ENCODE measurements at regions of chr20 and their contacts with region 1.

Region 1: DNA sequence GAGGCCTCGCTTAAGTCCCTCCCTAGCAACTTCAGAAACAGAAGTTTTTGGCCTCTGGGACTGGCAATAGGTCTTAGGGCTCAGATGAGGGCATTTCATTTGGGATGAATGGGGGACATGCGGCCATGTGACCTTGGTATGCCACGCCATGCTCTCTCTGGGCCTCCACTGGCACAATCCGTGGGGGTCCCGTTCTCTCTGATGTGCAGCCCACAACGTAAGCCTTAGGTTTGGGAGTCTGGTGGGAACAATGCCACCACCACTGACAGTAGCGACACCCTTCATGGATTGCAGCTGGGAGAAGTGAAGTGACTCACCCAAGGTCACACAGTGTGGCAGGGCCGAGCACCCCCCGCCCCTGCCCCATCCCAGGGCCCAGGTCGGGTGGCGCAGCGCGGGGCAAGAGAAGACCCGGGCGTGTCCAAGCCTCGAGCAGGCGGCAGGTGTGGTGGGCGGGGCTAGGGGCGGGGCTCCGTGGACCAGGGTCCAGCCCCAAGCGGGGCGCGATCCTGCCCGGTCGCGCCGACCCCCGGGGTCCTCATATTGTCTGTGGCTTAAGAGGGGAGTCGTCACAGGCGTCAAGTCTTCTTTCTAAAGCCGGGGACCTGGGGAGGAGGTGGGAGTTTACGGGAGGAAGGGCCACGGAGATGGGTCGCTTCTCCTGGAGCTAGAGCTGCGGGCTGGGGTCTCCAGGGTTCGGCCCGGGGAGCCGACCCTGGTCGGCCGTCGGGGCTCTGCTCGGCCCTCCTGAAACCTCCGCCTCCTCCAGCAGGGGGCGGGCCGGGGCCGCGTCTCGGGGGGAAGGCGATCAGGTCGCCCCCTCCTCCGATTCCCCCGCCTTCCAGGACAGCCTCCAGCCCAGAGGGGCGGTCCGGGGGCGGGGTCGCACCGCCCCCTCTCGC is 698 bp upstream of the CEBPB start:
- DNase-seq: peak; percentile 80 to 88
- ATAC-seq: peak; percentile 65 to 85 (median 71)
- H3K4me3 ChIP-seq: no peak overlapping the region
- H3K4me3 Mint-ChIP-seq: peak overlapping the region; percentile 57
- H3K27ac ChIP-seq: peak overlapping the region; percentile 36
- H3K27ac Mint-ChIP-seq: peak overlapping the region in 1 of 2 donors; percentile 94
- H3K4me1 ChIP-seq: peaks cover 27% of the 10 kb centered on the region
- H3K4me1 Mint-ChIP-seq: peaks cover 28 to 29% of the 10 kb centered on the region in 2 donors
- H3K27me3 ChIP-seq: peaks cover 2% of the 10 kb centered on the region
- H3K27me3 Mint-ChIP-seq: peaks cover 9 to 13% of the 10 kb centered on the region in 2 donors
- CTCF ChIP-seq: peak; percentile 74

Region 2: DNA sequence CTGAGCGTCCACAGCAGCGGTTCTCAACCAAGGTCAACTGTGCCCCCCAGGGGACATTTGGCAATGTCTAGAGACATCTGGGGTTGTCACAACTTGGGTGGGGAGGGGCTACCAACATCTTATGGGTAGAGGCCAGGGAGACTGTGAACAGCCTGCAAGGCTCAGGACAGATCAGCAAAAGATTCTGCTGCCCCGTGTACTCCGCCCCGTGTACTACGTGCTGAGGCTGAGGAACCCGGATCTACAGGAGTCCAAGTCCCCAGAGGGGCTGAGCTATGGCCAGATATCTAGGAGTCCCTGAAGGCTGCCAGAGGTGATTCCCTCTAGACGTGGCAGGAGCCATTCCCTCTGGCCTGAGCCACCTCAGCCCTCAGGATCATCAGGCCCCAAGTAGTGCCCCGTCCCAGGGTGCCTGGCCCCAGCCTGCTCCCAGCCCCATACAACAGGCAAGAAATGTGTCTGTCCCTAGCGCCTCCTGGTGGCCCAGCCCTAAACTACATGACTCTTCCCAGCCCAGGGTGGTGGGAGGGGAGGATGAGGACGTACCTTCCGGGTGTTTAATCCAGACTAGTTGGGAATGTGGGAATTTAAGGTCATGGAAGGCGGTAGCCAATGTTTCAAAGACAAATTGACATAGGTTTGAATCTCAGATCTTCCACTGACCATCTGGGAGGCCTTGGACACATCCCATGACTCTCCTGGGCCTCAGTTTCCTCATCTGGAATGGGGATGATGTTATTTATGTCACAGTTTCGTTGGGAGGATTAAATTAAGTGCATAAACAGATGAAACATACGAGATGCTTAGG is 270.7 kb after region 1 on chr20:
- intact Hi-C with region 1: loop called (anchors 1 kb)
- DNase-seq: peak; percentile 85 to 86
- ATAC-seq: peak; percentile 93 to 94 (median 93)
- H3K4me3 ChIP-seq: no peak overlapping the region
- H3K4me3 Mint-ChIP-seq: no peak overlapping the region
- H3K27ac ChIP-seq: no peak overlapping the region
- H3K27ac Mint-ChIP-seq: no peak overlapping the region
- H3K4me1 ChIP-seq: peaks cover 24% of the 10 kb centered on the region
- H3K4me1 Mint-ChIP-seq: peaks cover 4 to 15% of the 10 kb centered on the region in 2 donors
- H3K27me3 ChIP-seq: peaks cover 22% of the 10 kb centered on the region
- H3K27me3 Mint-ChIP-seq: peaks cover 22 to 33% of the 10 kb centered on the region in 2 donors
- CTCF ChIP-seq: peak; percentile 98

Region 3: DNA sequence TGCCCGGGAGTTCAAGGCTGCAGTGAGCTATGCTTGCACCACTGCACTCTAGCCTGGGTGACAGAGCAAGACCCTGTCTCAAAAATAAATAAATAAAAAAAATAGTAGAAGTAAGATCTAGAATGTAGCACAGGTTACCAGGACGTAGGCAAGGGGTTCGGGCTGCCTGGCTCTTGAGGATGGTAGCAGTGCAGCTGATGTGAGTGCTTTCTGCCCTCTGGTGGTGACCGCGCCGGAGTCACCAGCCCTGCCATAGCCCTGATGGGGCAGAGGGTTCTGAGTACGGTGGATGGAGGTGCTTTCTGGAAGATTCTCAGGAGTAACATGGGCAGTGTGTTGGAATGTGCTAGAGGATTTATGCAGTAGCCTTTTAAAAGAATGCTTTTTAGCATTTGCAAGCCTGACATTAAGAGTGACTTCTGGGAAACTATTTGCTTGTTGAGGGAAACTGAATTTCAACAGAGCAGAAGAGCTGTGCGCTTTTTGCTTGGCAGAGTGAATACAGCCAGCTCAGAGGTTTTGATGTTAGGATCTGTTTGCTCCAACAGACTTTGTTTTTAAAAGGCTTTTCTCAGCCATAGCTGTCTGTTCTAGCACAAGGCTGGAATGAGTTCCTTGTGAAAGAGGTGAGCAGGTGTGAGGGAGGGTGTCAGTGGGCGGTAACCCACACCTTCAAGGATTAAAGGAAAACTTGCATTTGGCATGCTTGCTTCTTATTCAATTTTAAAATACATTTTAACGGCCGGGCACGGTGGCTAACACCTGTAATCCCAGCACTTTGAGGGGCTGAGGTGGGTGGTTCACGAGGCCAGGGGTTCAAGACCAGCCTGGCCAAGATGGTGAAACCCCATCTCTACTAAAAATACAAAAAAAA is 386.2 kb after region 1 on chr20:
- intact Hi-C with region 1: loop called (anchors 1 kb)
- DNase-seq: peak; percentile 40 to 77
- ATAC-seq: peak; percentile 74 to 92 (median 86)
- H3K4me3 ChIP-seq: no peak overlapping the region
- H3K4me3 Mint-ChIP-seq: no peak overlapping the region
- H3K27ac ChIP-seq: no peak overlapping the region
- H3K27ac Mint-ChIP-seq: peak overlapping the region in 1 of 2 donors; percentile 70
- H3K4me1 ChIP-seq: no peaks in the 10 kb centered on the region
- H3K4me1 Mint-ChIP-seq: peaks cover 13 to 37% of the 10 kb centered on the region in 2 donors
- H3K27me3 ChIP-seq: no peaks in the 10 kb centered on the region
- H3K27me3 Mint-ChIP-seq: no peaks in the 10 kb centered on the region
- CTCF ChIP-seq: peak; percentile 57

Measured in natural killer cell (primary cell).